IMR-90 (cell line): ENCODE measurements at regions of chr10 and their contacts with region 1.

Region 1: DNA sequence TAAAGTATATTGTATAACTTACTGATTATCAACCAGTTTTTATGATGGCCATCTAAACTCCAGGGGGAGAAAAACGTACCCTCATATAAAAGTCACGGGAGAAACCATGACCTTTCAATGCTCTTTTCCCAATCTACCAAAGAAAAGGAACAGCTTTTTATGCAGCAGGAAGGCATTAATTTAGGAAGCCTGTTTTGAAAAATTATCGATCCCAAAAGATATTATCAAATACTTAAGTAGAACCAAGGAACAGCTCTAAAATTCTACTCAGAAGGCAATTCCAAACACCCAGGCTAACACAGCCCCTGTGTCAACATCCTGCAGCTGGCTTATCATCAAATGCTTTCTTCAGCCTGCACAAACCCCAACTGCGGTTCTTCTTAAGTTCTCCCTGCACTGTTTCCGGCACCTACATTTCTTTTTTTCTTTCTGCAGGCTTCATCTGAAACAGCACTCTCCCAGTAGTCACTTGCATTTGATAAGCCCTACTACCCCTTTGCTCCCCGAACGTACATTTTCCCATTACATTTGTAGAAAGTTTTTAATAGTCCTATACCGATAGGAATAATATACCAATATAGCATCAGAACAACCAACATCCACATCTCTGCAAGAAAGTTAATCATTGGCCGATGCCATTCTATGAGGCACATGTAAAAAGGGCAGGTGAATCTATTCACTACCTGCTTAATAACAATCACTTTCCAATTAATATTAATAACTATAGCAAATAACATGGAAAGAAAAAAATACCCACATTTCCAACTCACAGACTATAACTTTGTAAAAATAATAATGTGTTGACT is 47.9 kb downstream of the PIP4K2A start:
- DNase-seq: peak; percentile 62
- ATAC-seq: peak; percentile 64
- H3K4me3 ChIP-seq: no peak overlapping the region
- H3K27ac ChIP-seq: no peak overlapping the region
- H3K4me1 ChIP-seq: peaks cover 3% of the 10 kb centered on the region; the same call in 1 of the 2 replicates
- H3K27me3 ChIP-seq: no peaks in the 10 kb centered on the region
- CTCF ChIP-seq: no peak
- POLR2A ChIP-seq: no peak
- RAD21 ChIP-seq: no peak

Region 2: DNA sequence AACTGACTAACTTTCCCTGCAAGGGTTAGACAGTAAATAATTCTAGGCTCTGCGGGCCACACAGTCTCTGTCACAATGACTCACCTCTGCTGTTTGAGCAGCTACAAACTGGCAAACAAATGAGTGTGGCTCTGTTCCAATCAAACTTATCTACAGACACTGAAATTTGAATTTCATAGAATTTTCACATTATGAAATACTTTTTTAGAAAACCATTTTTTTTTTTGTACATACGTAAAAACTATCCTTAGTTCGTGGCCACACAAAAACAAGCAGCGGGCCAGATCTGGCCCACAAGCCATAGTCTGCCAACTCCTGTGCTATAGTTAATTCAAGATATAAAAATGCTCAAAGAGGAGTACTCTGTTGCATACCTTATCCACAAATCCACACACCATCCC is 15.3 kb after region 1 on chr10:
- CTCF ChIA-PET with region 1: interaction called, 4 read pairs
- POLR2A ChIA-PET with region 1: no interaction called
- dilution Hi-C with region 1: no loop called
- in situ Hi-C with region 1: no loop called
- intact Hi-C with region 1: loop called (anchors 2 kb)
- DNase-seq: peak; percentile 74
- ATAC-seq: peak; percentile 80
- H3K4me3 ChIP-seq: no peak overlapping the region
- H3K27ac ChIP-seq: no peak overlapping the region
- H3K4me1 ChIP-seq: peaks cover 20% of the 10 kb centered on the region
- H3K27me3 ChIP-seq: no peaks in the 10 kb centered on the region
- CTCF ChIP-seq: no peak
- POLR2A ChIP-seq: no peak
- RAD21 ChIP-seq: no peak